Heart left ventricle (tissue), 16 donors: ENCODE measurements at regions of chr6 and their contacts with region 1.

Region 1: GRCh38 chr6:133191323-133191722 is 49.8 kb upstream of the EYA4 start:
- DNase-seq: no peak
- ATAC-seq: no peak
- H3K4me3 ChIP-seq: no peak overlapping the region
- H3K27ac ChIP-seq: no peak overlapping the region
- H3K4me1 ChIP-seq: peaks cover 0 to 6% (median 0%) of the 10 kb centered on the region in 12 donors
- H3K27me3 ChIP-seq: no peaks in the 10 kb centered on the region
- CTCF ChIP-seq: no peak
- POLR2A ChIP-seq: no peak

Region 2: GRCh38 chr6:133548414-133549159 is 357.3 kb after region 1 on chr6:
- intact Hi-C with region 1: loop called in 5 of 10 experiments (anchors 2 to 10 kb)
- DNase-seq: no peak
- ATAC-seq: no peak
- H3K4me3 ChIP-seq: no peak overlapping the region
- H3K27ac ChIP-seq: no peak overlapping the region
- H3K4me1 ChIP-seq: peaks cover 0 to 16% (median 4%) of the 10 kb centered on the region in 12 donors
- H3K27me3 ChIP-seq: no peaks in the 10 kb centered on the region
- CTCF ChIP-seq: no peak
- POLR2A ChIP-seq: no peak